ENCODE measurements at regions of chr11 and their contacts with region 1.

Region 1: DNA sequence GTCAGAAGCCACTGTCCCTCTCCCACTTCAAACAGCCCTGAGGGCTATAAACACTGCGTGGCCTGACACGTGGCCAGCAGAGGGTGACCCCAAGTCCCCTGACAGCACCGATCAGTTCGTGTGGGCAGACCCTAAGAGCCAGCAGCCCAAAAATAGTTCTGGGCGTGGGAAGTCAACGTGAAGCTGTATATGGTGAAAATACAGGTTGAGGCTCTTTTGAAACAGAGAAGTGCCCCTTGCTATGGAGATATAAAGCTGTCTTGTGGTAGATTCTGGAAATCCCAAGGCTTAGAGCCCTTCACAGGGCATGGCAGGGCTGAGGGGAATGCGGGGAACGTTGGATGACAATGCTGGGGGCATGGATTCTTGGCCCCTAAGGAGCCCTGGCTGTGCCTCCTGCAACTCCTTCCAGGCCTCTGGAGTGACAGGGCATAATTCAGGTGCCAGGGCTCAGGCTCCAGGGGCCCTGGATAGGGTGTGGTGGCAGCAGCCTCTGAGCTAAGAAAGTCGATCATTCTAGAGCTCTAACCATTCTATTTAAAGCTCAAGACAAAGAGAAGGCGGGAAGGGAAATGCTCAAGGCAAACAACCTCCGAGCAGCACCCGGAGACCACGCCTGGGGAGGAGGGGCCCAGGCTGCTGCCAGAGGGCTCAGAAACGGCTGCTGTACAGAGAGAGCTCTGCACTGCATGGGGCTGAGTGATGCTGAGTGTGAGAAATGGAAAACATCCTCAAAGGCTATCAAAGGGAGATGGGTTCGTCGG is 60.4 kb upstream of the CD5 start:
- DNase-seq: peak; percentile 82
- ATAC-seq: peak; percentile 100
- H3K4me3 Mint-ChIP-seq: peak overlapping the region; percentile 75
- H3K27ac Mint-ChIP-seq: peak overlapping the region; percentile 96
- H3K4me1 Mint-ChIP-seq: peaks cover 44% of the 10 kb centered on the region
- H3K27me3 Mint-ChIP-seq: no peaks in the 10 kb centered on the region

Region 2: DNA sequence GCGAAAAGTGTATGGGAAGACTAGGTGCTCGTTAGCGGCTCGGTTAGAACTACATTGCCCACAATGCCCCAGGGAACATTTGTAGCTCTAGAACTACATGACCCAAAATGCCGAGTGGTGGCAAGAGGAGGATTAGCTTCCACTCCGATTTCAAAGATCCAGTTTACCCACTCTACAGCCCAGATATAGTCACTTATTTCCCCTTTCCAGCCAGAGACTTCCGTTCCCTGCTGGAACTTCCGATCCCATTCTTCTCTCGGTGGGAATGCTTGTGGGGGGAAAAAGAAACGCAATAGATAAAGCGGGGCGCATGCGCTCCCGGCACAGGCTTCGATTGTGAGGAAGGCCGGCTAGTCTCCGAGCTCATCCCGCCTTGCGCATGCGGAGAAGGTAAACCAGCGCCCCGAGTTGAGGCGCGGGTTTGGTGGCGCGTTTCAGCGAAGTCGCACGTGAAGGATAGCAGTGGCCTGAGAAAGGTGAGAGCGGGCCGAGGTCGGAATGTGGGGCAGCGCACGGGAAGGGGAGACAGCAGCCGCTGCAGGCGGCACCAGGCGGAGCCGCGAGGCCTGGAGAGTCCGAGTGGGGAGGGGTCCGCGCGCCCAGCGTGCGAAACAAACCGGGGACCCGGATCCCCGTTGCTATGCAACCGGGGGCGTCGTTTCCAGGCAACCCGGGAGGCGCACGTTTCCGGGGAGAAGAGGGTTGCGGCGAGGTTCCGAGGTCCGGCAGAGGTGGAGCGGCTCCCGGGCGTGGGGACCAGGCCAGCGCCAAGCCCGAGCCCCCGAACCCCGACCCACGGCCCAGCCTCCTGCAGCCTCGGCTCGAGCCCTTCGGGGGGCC is 127.9 kb before region 1 on chr11 and contains the start of gene TMEM109:
- POLR2A ChIA-PET with region 1: interaction called, 21 read pairs
- DNase-seq: peak; percentile 84
- ATAC-seq: peak; percentile 68
- H3K4me3 Mint-ChIP-seq: peak within 1 kb of the TSS; percentile 98
- H3K27ac Mint-ChIP-seq: peak within 1 kb of the TSS; percentile 98
- H3K4me1 Mint-ChIP-seq: peaks cover 46% of the 10 kb centered on the region
- H3K27me3 Mint-ChIP-seq: no peaks in the 10 kb centered on the region
- total RNA-seq, gene TMEM109: 97.8 to 102 TPM

Region 3: DNA sequence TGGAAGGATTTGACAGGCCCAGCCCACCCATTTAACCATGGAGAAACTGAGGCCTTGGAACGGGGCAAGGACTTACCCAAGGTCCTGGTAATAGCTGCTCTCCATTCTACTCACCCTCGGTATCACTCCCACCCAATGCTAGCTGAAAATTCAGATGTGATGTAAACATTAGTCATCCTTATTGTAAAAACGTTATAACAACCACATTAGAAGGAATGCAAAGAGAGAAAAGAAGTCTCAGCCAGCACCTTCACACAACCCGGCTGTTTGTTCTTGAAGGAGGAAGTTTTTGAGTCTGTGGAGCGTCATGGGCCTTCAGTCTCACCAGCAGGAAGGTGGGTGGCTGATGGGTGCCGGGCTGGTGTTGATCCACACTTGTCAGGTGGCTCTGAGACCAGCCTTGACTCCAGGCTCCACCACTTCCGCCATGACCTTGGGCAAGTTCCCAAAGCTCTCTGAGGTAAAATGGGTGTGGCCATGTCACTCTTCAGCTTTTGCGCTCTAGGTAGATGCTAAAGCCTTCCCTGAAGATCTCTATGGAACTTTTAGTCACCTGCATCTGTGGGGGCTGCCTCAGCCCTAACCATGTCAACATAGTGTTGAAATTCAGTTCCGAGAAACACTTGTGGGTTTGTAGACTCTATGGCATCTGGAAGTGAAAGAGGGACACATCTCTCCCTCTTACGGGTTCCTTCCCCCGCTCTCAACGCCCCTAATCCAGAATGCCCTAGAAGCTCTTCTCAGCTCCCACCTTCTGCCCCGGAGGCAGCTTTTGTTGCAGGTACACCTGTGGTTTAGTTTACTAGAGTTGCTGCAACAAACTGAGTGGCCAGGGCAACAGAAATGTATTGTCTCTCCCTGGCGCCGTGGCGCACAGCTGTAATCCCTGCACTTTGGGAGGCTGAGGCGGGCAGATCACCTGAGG is 55.7 kb before region 1 on chr11:
- POLR2A ChIA-PET with region 1: interaction called, 12 read pairs
- DNase-seq: peak; percentile 77
- ATAC-seq: peak; percentile 85
- H3K4me3 Mint-ChIP-seq: peak overlapping the region; percentile 83
- H3K27ac Mint-ChIP-seq: peak overlapping the region; percentile 97
- H3K4me1 Mint-ChIP-seq: peaks cover 82% of the 10 kb centered on the region
- H3K27me3 Mint-ChIP-seq: no peaks in the 10 kb centered on the region

Region 4: DNA sequence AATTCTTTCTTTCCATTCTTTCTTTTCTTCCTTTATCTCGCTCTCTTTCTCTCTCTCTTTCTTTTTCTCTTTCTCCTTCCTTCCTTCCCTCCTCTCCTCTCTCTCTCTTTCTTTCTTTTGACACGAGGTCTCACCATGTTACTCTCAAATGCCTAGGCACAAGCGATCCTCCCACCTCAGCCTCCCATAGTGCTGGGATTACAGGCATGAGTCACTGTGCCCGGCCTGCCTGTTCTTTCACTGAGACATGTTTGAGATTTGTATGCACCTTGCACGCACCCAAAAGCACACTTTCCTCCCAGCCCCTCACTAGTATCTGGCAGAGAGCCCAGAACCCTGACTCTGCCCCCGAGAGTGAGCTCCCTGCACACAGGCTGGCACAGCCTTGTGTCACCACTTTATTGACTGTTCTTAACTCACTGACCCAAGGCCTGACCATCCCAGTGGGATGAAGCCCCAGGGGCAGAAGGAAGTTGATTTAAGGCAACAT is 13.6 kb before region 1 on chr11:
- POLR2A ChIA-PET with region 1: interaction called, 80 read pairs
- DNase-seq: peak; percentile 46
- ATAC-seq: peak; percentile 27
- H3K4me3 Mint-ChIP-seq: peak overlapping the region; percentile 84
- H3K27ac Mint-ChIP-seq: peak overlapping the region; percentile 95
- H3K4me1 Mint-ChIP-seq: peaks cover 66% of the 10 kb centered on the region
- H3K27me3 Mint-ChIP-seq: no peaks in the 10 kb centered on the region

Region 5: DNA sequence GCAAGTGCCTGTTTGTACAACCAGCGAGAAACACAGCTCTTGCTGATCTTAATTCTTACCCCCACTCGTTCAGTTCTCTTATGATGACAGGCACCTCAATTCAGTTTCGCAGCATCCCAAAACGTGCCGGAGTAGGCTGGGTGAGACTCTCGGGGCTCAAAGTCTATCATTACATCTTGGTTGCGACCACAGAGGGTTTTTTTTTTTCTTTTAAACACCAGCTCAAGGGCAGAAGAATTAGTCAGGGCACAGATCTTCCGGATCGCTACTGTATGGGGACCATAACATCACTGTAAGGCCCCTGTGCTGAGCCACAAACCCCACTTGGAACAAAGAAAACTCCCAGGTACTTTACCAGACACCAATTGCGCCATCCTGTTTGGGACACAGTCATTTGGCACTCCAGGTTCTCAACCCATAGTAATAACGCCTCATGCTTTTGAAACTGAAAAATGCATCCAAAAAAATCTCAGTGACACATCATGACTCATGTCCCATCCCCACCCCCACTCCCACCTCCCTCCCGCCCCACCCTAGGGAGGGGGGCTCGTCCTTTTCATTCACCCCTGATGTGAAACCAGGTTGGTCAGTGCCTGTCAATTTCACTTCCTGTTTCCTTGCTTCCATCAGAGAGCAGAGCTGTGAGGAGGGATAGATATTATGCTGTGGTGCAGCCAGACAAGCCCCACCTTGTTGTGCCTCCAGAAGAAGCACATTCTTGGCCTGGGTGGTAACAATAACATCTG is 19.3 kb after region 1 on chr11:
- POLR2A ChIA-PET with region 1: interaction called, 10 read pairs
- DNase-seq: peak; percentile 53
- ATAC-seq: peak; percentile 70
- H3K4me3 Mint-ChIP-seq: peak overlapping the region; percentile 80
- H3K27ac Mint-ChIP-seq: peak overlapping the region; percentile 92
- H3K4me1 Mint-ChIP-seq: peaks cover 50% of the 10 kb centered on the region
- H3K27me3 Mint-ChIP-seq: no peaks in the 10 kb centered on the region

Region 6: DNA sequence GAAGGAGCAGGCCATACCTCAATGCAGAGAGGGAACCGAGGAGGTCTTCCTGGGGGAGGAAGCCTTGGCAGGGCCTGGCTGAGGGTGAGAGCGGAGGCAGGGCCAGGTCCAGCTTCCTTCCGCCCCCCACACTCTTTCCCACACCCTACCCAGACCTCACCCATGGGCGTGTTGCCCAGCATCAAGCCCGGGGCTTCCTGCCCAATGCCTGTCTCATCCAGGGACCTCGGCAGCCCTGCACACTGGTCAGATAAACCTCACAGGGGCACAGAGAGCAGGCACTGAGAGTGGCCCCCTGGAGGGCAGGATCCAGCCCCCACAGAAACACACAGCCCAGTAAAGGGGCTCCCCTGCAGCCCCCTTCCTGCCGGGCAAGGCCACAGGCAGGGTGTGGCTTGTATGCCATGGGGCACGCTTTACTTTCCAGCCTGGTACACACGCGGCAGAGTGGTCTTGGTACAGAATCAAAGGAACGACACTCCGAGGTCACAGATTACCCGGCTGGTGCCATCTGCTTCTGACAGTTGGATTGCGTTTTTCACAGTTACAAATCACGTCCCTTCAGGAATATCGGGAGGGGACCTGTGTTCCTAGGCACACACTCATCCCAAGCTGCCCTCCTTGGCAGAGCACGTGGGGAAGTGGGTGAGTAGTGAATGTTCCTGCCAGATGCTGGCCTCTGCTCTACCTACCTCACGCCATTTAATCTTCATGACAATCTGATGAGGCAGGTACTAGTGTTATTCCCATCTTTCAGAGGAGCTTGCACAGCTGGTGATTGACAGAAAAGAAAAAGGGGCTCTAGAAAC is 40.3 kb after region 1 on chr11:
- POLR2A ChIA-PET with region 1: interaction called, 27 read pairs
- DNase-seq: peak; percentile 48
- ATAC-seq: no peak
- H3K4me3 Mint-ChIP-seq: peak overlapping the region; percentile 82
- H3K27ac Mint-ChIP-seq: peak overlapping the region; percentile 97
- H3K4me1 Mint-ChIP-seq: peaks cover 60% of the 10 kb centered on the region
- H3K27me3 Mint-ChIP-seq: no peaks in the 10 kb centered on the region

Region 7: GRCh38 chr11:61102667-61103571 is 61.0 kb after region 1 on chr11:
- POLR2A ChIA-PET with region 1: interaction called, 12 read pairs
- DNase-seq: no peak
- ATAC-seq: peak; percentile 27
- H3K4me3 Mint-ChIP-seq: no peak overlapping the region
- H3K27ac Mint-ChIP-seq: no peak overlapping the region
- H3K4me1 Mint-ChIP-seq: peaks cover 37% of the 10 kb centered on the region
- H3K27me3 Mint-ChIP-seq: no peaks in the 10 kb centered on the region

Measured in activated naive CD8-positive, alpha-beta T cell treated with anti-CD3 and anti-CD28 coated beads, Interleukin-2, amount 10 ng/mL, durations not matched to agents 7 days and 5 days (primary cell).